ENCODE measurements at regions of chr1 and their contacts with region 1.

Region 1: GRCh38 chr1:207828485-207829158 is 76.8 kb downstream of the CD46 start:
- DNase-seq: peak; percentile 78 to 90
- ATAC-seq: peak; percentile 30 to 36
- H3K4me3 ChIP-seq: no peak overlapping the region
- H3K27ac ChIP-seq: peak overlapping the region; percentile 96 to 100 (median 99)
- H3K4me1 ChIP-seq: peaks cover 78 to 94% of the 10 kb centered on the region in 2 donors
- H3K27me3 ChIP-seq: no peaks in the 10 kb centered on the region
- CTCF ChIP-seq: peak; percentile 90 to 98 (median 93)
- POLR2A ChIP-seq: no peak

Region 2: GRCh38 chr1:206684478-206685333 is 1143.9 kb before region 1 on chr1 and contains the start of gene MAPKAPK2:
- in situ Hi-C with region 1: loop called in 1 of 4 experiments (anchors 25 kb)
- intact Hi-C with region 1: no loop called
- DNase-seq: peak; percentile 73 to 76
- ATAC-seq: peak; percentile 65 to 72
- H3K4me3 ChIP-seq: peak within 1 kb of the TSS; percentile 66 to 79 (median 75)
- H3K27ac ChIP-seq: peak within 1 kb of the TSS; percentile 93 to 98 (median 96)
- H3K4me1 ChIP-seq: peaks cover 39 to 43% of the 10 kb centered on the region in 2 donors
- H3K27me3 ChIP-seq: no peaks in the 10 kb centered on the region
- CTCF ChIP-seq: no peak
- POLR2A ChIP-seq: peak; percentile 82 to 83
- total RNA-seq, gene MAPKAPK2: 115 to 207 (median 140) TPM

Region 3: GRCh38 chr1:207868774-207869721 is 40.4 kb after region 1 on chr1:
- in situ Hi-C with region 1: loop called (anchors 5 to 10 kb)
- intact Hi-C with region 1: loop called (anchors 1 kb)
- DNase-seq: peak; percentile 28 to 70
- ATAC-seq: peak; percentile 70 to 72
- H3K4me3 ChIP-seq: peak overlapping the region; percentile 64 to 69 (median 65)
- H3K27ac ChIP-seq: peak overlapping the region; percentile 77 to 90 (median 90)
- H3K4me1 ChIP-seq: peaks cover 45 to 56% of the 10 kb centered on the region in 2 donors
- H3K27me3 ChIP-seq: no peaks in the 10 kb centered on the region
- CTCF ChIP-seq: peak; percentile 70 to 98 (median 97)
- POLR2A ChIP-seq: peak; percentile 69 to 75

Region 4: DNA sequence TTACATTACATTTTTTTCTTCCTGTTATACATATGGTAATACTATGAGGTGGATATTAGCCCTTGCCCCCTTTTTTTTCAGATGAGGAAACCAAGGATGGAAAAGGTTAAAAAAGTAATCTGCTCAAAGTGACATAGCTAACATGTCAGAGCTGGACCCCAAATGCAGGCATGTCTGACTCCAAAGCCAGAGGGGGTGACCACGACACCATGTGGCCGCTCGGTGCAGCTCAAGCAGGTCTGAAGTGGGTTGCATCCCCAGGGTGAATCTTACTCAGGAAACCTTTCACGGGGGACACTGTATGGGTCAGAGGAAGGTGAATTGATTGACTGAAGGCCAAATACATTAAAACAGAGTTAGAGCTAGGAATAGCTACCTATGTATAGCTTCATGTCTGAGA is 47.5 kb after region 1 on chr1:
- in situ Hi-C with region 1: loop called in 1 of 4 experiments (anchors 10 kb)
- intact Hi-C with region 1: no loop called
- DNase-seq: no peak
- ATAC-seq: no peak
- H3K4me3 ChIP-seq: no peak overlapping the region
- H3K27ac ChIP-seq: no peak overlapping the region
- H3K4me1 ChIP-seq: peaks cover 0 to 10% of the 10 kb centered on the region in 2 donors
- H3K27me3 ChIP-seq: no peaks in the 10 kb centered on the region
- CTCF ChIP-seq: no peak
- POLR2A ChIP-seq: no peak

Region 5: GRCh38 chr1:208036109-208036808 is 207.6 kb after region 1 on chr1:
- in situ Hi-C with region 1: no loop called
- intact Hi-C with region 1: no loop called
- DNase-seq: no peak
- ATAC-seq: peak in 1 of 2 donors; percentile 48
- H3K4me3 ChIP-seq: no peak overlapping the region
- H3K27ac ChIP-seq: no peak overlapping the region
- H3K4me1 ChIP-seq: no peaks in the 10 kb centered on the region
- H3K27me3 ChIP-seq: no peaks in the 10 kb centered on the region
- CTCF ChIP-seq: no peak
- POLR2A ChIP-seq: no peak